PC-3 (cell line): ENCODE measurements at regions of chr20 and their contacts with region 1.

Region 1: GRCh38 chr20:9989066-9989724 is 45.6 kb upstream of the ANKEF1 start:
- DNase-seq: no peak
- ATAC-seq: no peak
- H3K4me3 ChIP-seq: no peak overlapping the region
- H3K27ac ChIP-seq: no peak overlapping the region
- H3K4me1 ChIP-seq: no peaks in the 10 kb centered on the region
- H3K27me3 ChIP-seq: peaks cover 60% of the 10 kb centered on the region
- CTCF ChIP-seq: no peak

Region 2: GRCh38 chr20:10022625-10023024 is 33.4 kb after region 1 on chr20:
- CTCF ChIA-PET with region 1: no interaction called
- POLR2A ChIA-PET with region 1: no interaction called
- intact Hi-C with region 1: loop called (anchors 5 kb)
- DNase-seq: no peak
- ATAC-seq: no peak
- H3K4me3 ChIP-seq: no peak overlapping the region
- H3K27ac ChIP-seq: no peak overlapping the region
- H3K4me1 ChIP-seq: no peaks in the 10 kb centered on the region
- H3K27me3 ChIP-seq: peaks cover 56% of the 10 kb centered on the region
- CTCF ChIP-seq: no peak

Region 3: GRCh38 chr20:10040070-10040975 is 51.1 kb after region 1 on chr20:
- CTCF ChIA-PET with region 1: no interaction called
- POLR2A ChIA-PET with region 1: no interaction called
- intact Hi-C with region 1: no loop called
- DNase-seq: peak; percentile 98
- ATAC-seq: peak; percentile 99
- H3K4me3 ChIP-seq: no peak overlapping the region
- H3K27ac ChIP-seq: peak overlapping the region; percentile 20; the same call in 1 of the 2 replicates
- H3K4me1 ChIP-seq: peaks cover 22% of the 10 kb centered on the region
- H3K27me3 ChIP-seq: no peaks in the 10 kb centered on the region
- CTCF ChIP-seq: no peak